Caco-2 (cell line): ENCODE measurements at regions of chr9 and their contacts with region 1.

Region 1: DNA sequence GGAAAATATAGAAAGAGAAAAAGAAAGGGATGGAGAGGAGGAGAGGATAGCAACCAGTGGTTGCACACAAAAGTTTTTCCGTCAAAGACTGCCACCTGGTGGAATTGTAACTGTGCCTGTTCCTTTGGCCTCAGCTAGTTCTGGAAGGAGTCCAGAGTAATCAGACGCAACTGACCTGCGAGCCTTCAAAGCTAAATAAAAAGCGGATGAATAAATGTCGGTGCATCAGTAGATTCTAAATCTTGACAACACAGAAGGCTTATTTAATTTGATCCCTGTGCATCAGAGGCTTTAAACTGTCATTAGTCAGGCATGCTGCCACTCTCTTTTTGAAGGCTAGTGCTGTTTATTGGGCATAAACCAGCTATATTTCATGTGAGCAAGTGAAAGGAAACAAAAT is 132.9 kb upstream of the ACO1 start:
- DNase-seq: peak; percentile 54 to 65
- H3K4me3 ChIP-seq: no peak overlapping the region
- H3K4me3 Mint-ChIP-seq: no peak overlapping the region
- H3K27ac Mint-ChIP-seq: no peak overlapping the region
- H3K4me1 ChIP-seq: no peaks in the 10 kb centered on the region
- H3K4me1 Mint-ChIP-seq: no peaks in the 10 kb centered on the region
- H3K27me3 ChIP-seq: no peaks in the 10 kb centered on the region
- H3K27me3 Mint-ChIP-seq: peaks cover 3% of the 10 kb centered on the region
- CTCF ChIP-seq: peak; percentile 63 to 67

Region 2: GRCh38 chr9:31839273-31839672 is 412.3 kb before region 1 on chr9:
- CTCF ChIA-PET with region 1: interaction called, 3 read pairs
- POLR2A ChIA-PET with region 1: no interaction called
- intact Hi-C with region 1: loop called (anchors 1 kb)
- DNase-seq: no peak
- H3K4me3 ChIP-seq: no peak overlapping the region
- H3K4me3 Mint-ChIP-seq: no peak overlapping the region
- H3K27ac Mint-ChIP-seq: no peak overlapping the region
- H3K4me1 ChIP-seq: no peaks in the 10 kb centered on the region
- H3K4me1 Mint-ChIP-seq: no peaks in the 10 kb centered on the region
- H3K27me3 ChIP-seq: no peaks in the 10 kb centered on the region
- H3K27me3 Mint-ChIP-seq: no peaks in the 10 kb centered on the region
- CTCF ChIP-seq: peak in 1 of 2 experiments; percentile 4

Region 3: DNA sequence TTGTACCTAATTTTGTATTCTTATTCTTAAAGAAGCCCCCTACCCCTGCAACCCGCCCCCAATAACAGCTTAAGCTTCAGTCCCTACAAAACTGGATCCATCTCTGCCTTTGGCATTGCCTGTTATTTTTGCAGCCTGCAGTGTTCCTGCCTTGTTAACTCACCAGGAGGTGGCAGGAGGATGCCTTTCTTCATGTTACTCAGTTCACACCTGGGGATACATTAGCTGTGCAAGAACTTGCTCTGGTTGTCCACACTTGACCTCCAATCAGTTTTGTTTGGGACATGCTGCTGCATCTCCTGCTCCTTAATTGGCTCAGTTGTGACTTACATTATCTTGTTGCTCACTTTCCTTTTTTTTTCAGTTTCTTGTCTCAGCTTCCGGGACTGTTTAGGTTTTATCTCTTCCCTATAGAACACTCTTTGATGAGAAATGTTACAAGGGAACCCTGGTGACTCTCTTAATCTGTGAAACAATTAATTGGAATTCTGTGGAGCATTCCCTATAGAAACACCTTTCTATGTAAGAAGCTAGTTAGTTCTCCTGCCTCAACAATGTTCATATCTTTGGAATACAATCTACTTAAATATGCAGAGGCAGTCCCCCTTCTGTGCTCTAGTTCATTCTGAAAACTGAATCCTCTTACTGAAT is 334.8 kb before region 1 on chr9:
- CTCF ChIA-PET with region 1: interaction called, 10 read pairs
- POLR2A ChIA-PET with region 1: no interaction called
- intact Hi-C with region 1: loop called (anchors 1 kb)
- DNase-seq: peak in 1 of 2 experiments; percentile 33
- H3K4me3 ChIP-seq: no peak overlapping the region
- H3K4me3 Mint-ChIP-seq: no peak overlapping the region
- H3K27ac Mint-ChIP-seq: no peak overlapping the region
- H3K4me1 ChIP-seq: no peaks in the 10 kb centered on the region
- H3K4me1 Mint-ChIP-seq: no peaks in the 10 kb centered on the region
- H3K27me3 ChIP-seq: no peaks in the 10 kb centered on the region
- H3K27me3 Mint-ChIP-seq: no peaks in the 10 kb centered on the region
- CTCF ChIP-seq: peak in 1 of 2 experiments; percentile 45

Region 4: DNA sequence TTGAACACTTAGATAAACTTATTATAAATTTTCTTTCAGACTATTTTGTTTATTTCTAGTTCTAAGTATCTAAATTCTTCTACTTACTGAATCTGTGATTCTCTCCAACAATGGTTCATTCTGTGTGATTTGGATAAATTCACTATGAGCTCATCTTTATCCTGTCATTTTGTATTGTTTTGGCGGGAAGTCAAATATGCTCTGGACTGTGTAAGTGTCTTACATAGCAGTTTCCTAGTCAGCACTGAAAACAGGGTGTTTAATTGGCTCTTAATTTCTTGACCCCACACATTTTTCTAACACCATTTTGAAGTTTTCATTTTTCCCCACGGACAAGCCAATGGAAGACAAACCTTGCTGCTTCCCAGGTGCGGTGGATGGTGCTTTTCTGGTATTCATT is 74.1 kb before region 1 on chr9:
- CTCF ChIA-PET with region 1: no interaction called
- POLR2A ChIA-PET with region 1: no interaction called
- intact Hi-C with region 1: no loop called
- DNase-seq: no peak
- H3K4me3 ChIP-seq: no peak overlapping the region
- H3K4me3 Mint-ChIP-seq: no peak overlapping the region
- H3K27ac Mint-ChIP-seq: no peak overlapping the region
- H3K4me1 ChIP-seq: no peaks in the 10 kb centered on the region
- H3K4me1 Mint-ChIP-seq: no peaks in the 10 kb centered on the region
- H3K27me3 ChIP-seq: no peaks in the 10 kb centered on the region
- H3K27me3 Mint-ChIP-seq: peaks cover 4% of the 10 kb centered on the region
- CTCF ChIP-seq: no peak